Tibial artery (tissue), 4 donors: ENCODE measurements at regions of chr1 and their contacts with region 1.

Region 1: DNA sequence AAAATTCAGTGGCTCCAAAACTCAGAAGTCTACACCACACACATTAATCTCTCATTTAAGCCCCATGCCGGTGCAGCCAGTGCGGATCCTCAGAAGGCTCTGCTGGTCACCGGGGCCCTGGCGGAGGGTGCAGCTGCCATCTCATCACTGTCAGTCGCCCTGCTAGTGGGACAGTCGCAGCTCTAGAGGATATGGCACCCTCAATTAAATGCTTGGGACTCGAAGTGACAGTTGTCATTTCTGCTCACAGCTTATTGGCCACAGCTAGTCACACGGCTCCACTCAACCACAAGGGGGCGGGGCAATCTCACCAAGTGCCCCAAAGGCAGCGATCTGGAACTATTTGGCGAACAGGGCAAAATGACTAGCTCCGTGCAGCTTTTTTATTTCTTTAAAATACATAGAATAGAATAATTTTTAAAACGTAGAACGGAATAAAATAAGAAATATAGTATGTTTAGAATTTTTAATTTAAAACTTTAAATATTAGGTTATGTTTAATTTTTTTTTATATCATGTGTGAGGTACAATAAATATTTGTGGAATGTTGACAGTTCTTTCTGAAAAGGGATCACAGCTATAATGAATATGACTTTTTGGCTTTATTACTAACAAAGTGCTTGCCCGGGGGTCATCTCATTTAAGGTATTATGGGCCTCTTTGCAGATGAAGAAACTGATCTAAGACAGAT is 8.0 kb upstream of the MAN1C1 start:
- DNase-seq: peak; percentile 90 to 91
- H3K4me3 ChIP-seq: no peak overlapping the region
- H3K27ac ChIP-seq: no peak overlapping the region
- H3K4me1 ChIP-seq: peaks cover 0 to 2% (median 0%) of the 10 kb centered on the region in 4 donors
- H3K27me3 ChIP-seq: no peaks in the 10 kb centered on the region
- CTCF ChIP-seq: peak; percentile 75 to 85

Region 2: DNA sequence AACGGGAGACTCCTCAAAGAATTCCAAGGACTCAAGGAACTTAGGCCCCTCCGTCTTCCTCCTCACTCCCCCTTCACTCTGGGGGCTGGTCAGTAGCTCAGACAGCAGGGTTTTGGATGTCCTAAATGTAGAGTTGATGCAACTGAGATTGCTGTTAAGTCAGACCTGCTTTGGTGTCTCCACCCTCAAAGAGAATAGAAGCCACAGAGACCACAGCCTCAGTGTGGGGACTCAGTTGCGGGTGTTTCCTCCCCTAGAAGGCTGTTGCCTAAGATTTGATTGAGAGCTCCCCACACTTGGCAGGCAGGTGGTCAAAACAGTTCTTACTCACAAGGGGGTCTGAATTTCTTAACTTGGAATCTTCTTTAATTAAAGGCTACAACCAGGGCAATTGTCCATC is 15.5 kb after region 1 on chr1:
- intact Hi-C with region 1: no loop called
- DNase-seq: no peak
- H3K4me3 ChIP-seq: no peak overlapping the region
- H3K27ac ChIP-seq: no peak overlapping the region
- H3K4me1 ChIP-seq: peaks cover 0 to 29% (median 8%) of the 10 kb centered on the region in 4 donors
- H3K27me3 ChIP-seq: no peaks in the 10 kb centered on the region
- CTCF ChIP-seq: no peak

Region 3: DNA sequence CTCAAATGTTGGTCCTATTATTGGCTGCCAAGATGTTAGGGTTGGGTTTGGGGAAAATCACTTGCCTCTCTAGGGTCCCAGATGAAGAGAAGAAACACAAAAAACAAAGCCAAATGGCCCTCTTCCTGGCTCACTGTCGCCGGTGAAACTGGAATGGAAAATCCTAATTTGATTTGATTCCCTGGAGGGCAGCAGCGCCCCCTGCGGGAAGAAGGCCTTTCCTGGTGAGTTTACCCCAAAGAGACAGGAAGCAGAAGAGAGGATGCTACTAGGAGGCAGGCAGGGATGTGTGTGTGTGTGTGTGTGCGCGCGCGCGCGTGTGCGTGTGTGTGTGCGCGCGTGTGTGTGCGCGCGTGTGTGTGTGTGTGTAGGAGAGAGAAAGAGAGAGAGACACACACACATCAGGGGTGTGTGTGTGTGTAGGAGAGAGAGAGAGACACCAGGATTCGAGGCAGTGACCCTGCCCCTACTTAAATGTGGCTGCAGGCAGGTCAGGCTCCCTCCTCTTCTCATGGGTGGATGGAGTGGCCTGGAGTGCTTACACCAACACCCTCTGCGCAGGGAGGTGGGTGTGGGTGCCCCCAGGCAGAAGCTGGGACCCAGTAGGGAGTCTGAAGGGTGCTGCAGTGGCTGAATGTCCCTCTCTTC is 188.3 kb after region 1 on chr1:
- intact Hi-C with region 1: loop called (anchors 2 kb)
- DNase-seq: peak; percentile 88 to 89
- H3K4me3 ChIP-seq: no peak overlapping the region
- H3K27ac ChIP-seq: peak overlapping the region in 1 of 2 donors; percentile 20
- H3K4me1 ChIP-seq: peaks cover 0 to 34% (median 29%) of the 10 kb centered on the region in 4 donors
- H3K27me3 ChIP-seq: no peaks in the 10 kb centered on the region
- CTCF ChIP-seq: peak; percentile 69 to 84

Region 4: DNA sequence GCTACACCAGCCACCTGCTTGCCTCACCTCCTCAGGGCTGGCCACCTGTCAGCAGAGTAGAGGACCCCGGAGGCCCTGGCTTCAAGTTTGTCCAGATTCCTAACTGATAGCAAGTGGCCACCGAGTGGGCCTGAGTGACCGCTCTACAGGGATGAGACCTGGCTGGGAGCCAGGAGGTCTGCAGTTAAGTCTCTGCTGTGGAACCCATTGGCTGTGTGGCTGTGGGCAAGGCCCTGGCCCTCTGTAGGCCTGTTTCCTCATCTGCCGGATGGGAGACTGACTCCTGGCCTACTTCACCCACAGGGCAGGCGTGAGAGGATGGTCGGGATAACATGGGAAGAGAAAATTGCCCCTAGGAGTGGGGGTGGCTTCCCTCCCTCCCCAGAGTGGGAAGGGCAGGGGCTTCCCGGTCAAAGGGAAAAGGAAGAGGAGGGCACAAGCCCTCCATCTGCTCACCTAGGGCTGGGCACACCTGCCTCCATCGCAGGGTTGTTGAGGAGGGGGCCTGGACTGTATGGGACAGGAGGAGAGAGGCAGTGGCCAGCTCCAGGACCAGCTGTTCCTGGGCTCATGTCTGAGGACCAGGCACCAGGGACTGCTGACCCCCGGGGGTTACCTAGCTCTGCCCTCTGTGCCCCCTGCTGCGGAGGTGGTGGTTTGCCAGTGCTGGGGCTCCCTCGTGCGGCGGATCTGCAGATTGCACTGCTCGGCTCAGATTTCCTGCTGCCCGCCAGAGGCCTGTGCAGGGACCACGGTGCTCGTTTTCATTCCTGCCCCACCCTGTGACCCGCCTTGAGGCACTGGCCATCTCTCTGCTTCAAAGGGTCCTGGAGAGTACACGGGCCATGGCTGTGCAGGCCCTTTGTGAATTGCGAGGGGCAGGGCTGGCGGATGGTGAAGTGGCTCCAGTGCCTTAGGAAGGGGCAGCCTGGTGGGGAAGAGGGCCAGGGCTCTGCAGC is 202.0 kb after region 1 on chr1:
- intact Hi-C with region 1: loop called (anchors 5 kb)
- DNase-seq: peak in 1 of 2 donors; percentile 65
- H3K4me3 ChIP-seq: no peak overlapping the region
- H3K27ac ChIP-seq: no peak overlapping the region
- H3K4me1 ChIP-seq: peaks cover 0 to 47% (median 29%) of the 10 kb centered on the region in 4 donors
- H3K27me3 ChIP-seq: no peaks in the 10 kb centered on the region
- CTCF ChIP-seq: peak; percentile 93

Region 5: GRCh38 chr1:26111530-26112406 is 503.1 kb after region 1 on chr1 and contains the start of gene PDIK1L:
- intact Hi-C with region 1: no loop called
- DNase-seq: peak; percentile 86 to 95
- H3K4me3 ChIP-seq: peak within 1 kb of the TSS; percentile 75 to 93
- H3K27ac ChIP-seq: peak within 1 kb of the TSS; percentile 91 to 92
- H3K4me1 ChIP-seq: peaks cover 0 to 24% (median 14%) of the 10 kb centered on the region in 4 donors
- H3K27me3 ChIP-seq: no peaks in the 10 kb centered on the region
- CTCF ChIP-seq: peak in 1 of 2 experiments; percentile 1